Stomach (tissue), 19 donors: ENCODE measurements at regions of chr5 and their contacts with region 1.

Region 1: DNA sequence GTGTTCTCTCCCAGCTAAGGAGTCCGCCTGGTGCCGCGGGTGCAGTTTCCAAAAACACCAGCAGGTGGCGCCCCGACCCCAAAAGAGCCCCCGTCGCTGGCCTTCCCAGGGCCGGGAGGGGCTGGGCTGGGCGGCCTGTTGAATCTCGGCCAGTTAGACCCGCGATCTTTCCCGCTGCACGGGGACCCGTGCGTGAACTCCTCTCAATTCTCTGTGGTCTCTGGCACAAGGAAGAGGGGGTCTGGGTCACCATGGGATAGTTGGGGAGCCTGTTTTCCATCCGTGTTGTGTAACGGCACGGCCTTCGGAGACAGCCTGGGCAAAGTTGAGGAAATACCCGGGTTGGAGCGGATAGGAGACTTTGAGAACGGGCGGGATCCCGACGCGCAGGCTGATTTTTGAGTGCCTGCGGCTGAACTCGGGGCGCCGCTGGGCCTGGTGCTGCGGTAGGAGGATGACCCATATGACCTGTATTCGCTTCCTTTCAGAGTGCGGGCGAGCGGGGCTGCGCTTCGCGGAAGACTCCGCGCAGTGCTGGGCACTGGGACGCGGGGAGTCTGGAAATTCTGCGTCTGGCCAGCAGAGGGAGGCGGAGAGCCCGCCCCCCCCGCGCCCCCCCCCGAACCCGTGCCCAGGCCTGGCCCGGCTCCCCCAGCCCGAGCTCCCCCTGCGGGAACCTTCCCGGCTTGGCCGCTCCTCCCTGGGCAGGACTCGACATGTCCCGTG is 7.9 kb upstream of the PSD2 start:
- DNase-seq: peak; percentile 89 to 93
- H3K4me3 ChIP-seq: peak overlapping the region; percentile 59 to 64 (median 62)
- H3K27ac ChIP-seq: peak overlapping the region in 2 of 5 donors; percentile 40 to 63
- H3K4me1 ChIP-seq: peaks cover 11 to 16% (median 12%) of the 10 kb centered on the region in 4 donors
- H3K27me3 ChIP-seq: peaks cover 0 to 33% (median 0%) of the 10 kb centered on the region in 3 donors
- CTCF ChIP-seq: peak in 6 of 7 experiments; percentile 77 to 99 (median 94)
- EP300 ChIP-seq: no peak
- POLR2A ChIP-seq: no peak

Region 2: GRCh38 chr5:139725073-139725830 is 62.5 kb before region 1 on chr5:
- intact Hi-C with region 1: no loop called
- DNase-seq: peak; percentile 35 to 80
- H3K4me3 ChIP-seq: no peak overlapping the region
- H3K27ac ChIP-seq: peak overlapping the region in 1 of 5 donors; percentile 40
- H3K4me1 ChIP-seq: peaks cover 0 to 11% (median 4%) of the 10 kb centered on the region in 4 donors
- H3K27me3 ChIP-seq: no peaks in the 10 kb centered on the region
- CTCF ChIP-seq: no peak
- EP300 ChIP-seq: no peak
- POLR2A ChIP-seq: no peak

Region 3: DNA sequence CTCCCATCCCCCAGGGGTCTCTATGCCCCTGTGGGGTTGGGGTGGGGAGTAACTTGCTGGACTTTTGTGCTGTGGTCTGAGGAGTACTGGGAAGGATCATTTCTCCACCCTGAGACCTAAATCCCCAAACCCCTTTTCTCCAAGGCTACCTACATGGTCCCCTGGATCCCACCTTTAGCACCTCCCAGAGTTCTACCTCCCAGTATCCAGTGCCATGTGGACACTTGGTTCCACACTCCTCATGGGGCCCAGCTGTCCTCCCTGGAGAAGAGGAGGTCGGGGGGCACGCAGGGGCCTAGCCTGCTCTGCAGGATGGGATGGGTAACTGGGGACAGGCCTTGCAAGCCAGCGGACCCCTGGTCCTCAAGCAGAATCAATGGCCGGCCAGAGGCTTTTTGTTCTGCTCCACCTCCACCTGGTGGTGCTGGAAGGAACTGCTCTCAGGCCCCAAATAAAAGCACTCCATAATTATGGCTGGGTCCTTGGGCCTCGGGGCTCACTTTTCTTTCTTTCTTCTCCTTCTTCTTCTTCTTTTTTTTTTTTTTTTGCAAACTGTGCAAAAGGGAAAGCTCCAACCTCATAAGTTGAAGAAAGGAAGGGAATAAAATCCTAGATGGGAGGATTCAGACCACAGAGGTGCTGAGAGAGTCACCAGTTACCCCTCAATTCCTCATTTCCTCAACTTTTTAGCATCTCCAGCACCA is 76.3 kb after region 1 on chr5:
- intact Hi-C with region 1: loop called (anchors 5 kb)
- DNase-seq: peak; percentile 74 to 83
- H3K4me3 ChIP-seq: no peak overlapping the region
- H3K27ac ChIP-seq: peak overlapping the region in 1 of 5 donors; percentile 65
- H3K4me1 ChIP-seq: peaks cover 0 to 22% (median 13%) of the 10 kb centered on the region in 4 donors
- H3K27me3 ChIP-seq: no peaks in the 10 kb centered on the region
- CTCF ChIP-seq: peak in 5 of 7 experiments; percentile 60 to 96 (median 92)
- EP300 ChIP-seq: no peak
- POLR2A ChIP-seq: no peak

Region 4: GRCh38 chr5:139968547-139969261 is 181.0 kb after region 1 on chr5:
- intact Hi-C with region 1: loop called (anchors 2 kb)
- DNase-seq: peak; percentile 94
- H3K4me3 ChIP-seq: no peak overlapping the region
- H3K27ac ChIP-seq: no peak overlapping the region
- H3K4me1 ChIP-seq: peaks cover 0 to 15% (median 10%) of the 10 kb centered on the region in 4 donors
- H3K27me3 ChIP-seq: no peaks in the 10 kb centered on the region
- CTCF ChIP-seq: peak in 6 of 7 experiments; percentile 92 to 100 (median 98)
- EP300 ChIP-seq: no peak
- POLR2A ChIP-seq: no peak